Activated CD4-positive, alpha-beta T cell treated with anti-CD3 and anti-CD28 coated beads for 36 hours (primary cell): ENCODE measurements at regions of chr13 and their contacts with region 1.

Region 1: DNA sequence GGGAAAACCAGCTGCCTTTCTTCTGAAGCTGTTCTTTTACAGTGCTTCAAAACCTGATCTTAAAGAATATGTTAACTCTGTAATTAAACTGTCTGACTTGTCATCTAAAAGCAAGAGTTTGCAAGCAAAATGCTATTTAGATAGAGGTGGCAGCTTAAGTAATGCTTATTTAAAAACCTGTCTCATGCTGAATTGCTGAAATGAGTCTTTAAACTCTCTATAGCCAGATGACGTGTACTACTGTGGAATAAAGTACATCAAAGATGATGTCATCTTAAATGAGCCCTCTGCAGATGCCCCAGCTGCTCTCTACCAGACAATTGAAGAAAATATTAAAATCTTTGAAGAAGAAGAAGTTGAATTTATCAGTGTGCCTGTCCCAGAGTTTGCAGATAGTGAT is 22.9 kb downstream of the ITM2B start:
- DNase-seq: no peak
- ATAC-seq: peak; percentile 66
- H3K4me3 Mint-ChIP-seq: no peak overlapping the region
- H3K27ac Mint-ChIP-seq: peak overlapping the region; percentile 9
- H3K4me1 Mint-ChIP-seq: peaks cover 45% of the 10 kb centered on the region
- H3K27me3 Mint-ChIP-seq: no peaks in the 10 kb centered on the region

Region 2: GRCh38 chr13:48291730-48292129 is 35.8 kb after region 1 on chr13:
- CTCF ChIA-PET with region 1: no interaction called
- POLR2A ChIA-PET with region 1: no interaction called
- intact Hi-C with region 1: loop called in 1 of 2 experiments (anchors 5 kb)
- DNase-seq: no peak
- ATAC-seq: no peak
- H3K4me3 Mint-ChIP-seq: no peak overlapping the region
- H3K27ac Mint-ChIP-seq: no peak overlapping the region
- H3K4me1 Mint-ChIP-seq: no peaks in the 10 kb centered on the region
- H3K27me3 Mint-ChIP-seq: peaks cover 4% of the 10 kb centered on the region

Region 3: GRCh38 chr13:48542581-48543341 is 286.8 kb after region 1 on chr13:
- CTCF ChIA-PET with region 1: no interaction called
- POLR2A ChIA-PET with region 1: no interaction called
- intact Hi-C with region 1: no loop called
- DNase-seq: no peak
- ATAC-seq: no peak
- H3K4me3 Mint-ChIP-seq: no peak overlapping the region
- H3K27ac Mint-ChIP-seq: no peak overlapping the region
- H3K4me1 Mint-ChIP-seq: no peaks in the 10 kb centered on the region
- H3K27me3 Mint-ChIP-seq: peaks cover 2% of the 10 kb centered on the region